ENCODE measurements at regions of chr6 and their contacts with region 1.

Region 1: GRCh38 chr6:158220786-158221442 is 52.8 kb downstream of the GTF2H5 start:
- DNase-seq: no peak
- H3K4me3 ChIP-seq: no peak overlapping the region
- CTCF ChIP-seq: peak; percentile 95

Region 2: DNA sequence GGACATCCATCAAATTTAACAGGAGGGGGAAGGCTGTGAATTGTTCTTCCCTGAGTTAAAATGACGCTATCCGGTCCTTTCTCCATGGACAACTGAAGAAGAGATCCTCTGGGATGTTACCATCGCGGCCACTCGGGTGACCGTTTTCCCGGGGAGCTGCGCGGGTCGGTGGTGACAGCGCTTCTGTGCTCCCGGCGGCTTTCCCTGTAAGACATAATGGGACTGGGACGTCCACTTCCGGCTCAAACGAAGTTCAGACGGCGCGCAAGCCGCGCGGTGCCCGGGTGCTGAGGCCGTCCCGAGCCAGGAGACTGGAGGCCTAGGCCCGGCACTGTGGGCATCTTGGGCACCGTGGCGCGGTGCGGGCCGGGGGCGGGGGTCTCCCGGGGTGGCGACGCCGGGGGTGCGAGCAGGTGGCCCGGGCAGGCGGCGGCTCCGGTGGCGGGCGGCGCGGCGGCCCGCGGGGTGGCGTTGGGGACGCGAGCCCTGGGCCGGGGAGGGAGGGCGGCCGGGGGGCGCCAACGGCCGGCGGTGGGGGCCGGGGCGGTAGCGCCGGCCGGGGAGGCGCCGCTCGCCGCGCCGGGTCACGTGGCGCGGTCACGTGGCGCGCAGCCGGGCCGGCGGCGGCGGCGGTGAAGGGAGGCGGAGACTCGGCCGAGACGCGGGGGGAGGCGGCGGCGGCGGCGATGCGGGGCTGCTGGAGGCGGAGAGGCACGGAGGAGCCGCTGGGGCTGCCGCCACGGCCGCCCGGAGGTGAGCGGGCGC is 10.8 kb after region 1 on chr6:
- CTCF ChIA-PET with region 1: interaction called, 34 read pairs
- POLR2A ChIA-PET with region 1: no interaction called
- DNase-seq: no peak
- H3K4me3 ChIP-seq: peak overlapping the region; percentile 73
- CTCF ChIP-seq: no peak

Region 3: GRCh38 chr6:158327211-158327610 is 106.3 kb after region 1 on chr6:
- CTCF ChIA-PET with region 1: no interaction called
- POLR2A ChIA-PET with region 1: no interaction called
- DNase-seq: no peak
- H3K4me3 ChIP-seq: no peak overlapping the region
- CTCF ChIP-seq: no peak

Region 4: DNA sequence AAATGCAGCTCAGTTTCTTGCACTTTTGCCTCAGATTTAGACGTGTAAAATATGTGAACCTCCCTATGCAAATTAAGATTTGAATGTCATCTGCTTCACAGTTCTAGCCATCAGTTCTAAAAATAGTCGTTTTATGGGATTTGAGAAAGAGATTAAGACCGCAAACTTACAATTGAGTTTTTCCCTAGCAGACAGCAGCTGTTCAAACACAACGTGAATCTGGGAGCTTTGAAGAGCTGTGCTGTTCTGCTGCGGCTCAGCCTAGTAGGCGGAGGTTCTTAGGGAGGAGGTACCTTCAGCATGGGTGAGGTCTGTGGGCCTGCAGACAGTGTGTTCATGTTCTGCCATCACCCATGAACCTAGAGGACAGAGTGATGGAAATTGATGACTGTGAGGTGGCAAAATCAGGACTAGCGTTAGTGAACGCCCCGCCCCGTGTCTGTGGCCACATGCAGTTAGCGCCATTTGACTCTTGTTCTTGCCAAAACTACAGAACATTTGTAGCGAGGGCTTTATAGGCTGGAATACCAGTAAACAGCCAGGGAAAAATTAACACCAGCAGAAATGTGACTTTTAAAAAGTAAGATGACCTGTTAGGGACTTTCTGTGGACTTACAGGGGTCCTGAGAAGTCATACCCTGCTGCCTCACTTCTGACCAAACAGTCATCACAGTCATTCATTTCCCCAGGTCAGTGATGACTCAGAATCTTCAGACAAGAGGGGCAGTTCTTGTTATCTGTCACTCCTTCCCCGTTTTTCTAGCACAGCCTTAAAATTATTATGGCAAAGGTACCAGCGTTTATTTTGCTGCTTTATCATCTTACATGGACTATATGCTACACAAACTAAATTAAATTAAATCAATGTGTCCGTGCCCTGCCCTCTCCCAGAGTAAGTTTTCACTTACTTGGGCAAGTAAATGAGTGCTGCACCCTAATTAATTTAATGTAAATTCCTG is 254.7 kb after region 1 on chr6:
- CTCF ChIA-PET with region 1: interaction called, 10 read pairs
- POLR2A ChIA-PET with region 1: no interaction called
- DNase-seq: peak; percentile 65
- H3K4me3 ChIP-seq: no peak overlapping the region
- CTCF ChIP-seq: no peak

Region 5: GRCh38 chr6:158518191-158519127 is 297.5 kb after region 1 on chr6:
- CTCF ChIA-PET with region 1: interaction called, 24 read pairs
- POLR2A ChIA-PET with region 1: no interaction called
- DNase-seq: no peak
- H3K4me3 ChIP-seq: peak overlapping the region; percentile 51
- CTCF ChIP-seq: peak; percentile 73

Region 6: GRCh38 chr6:158605266-158605878 is 384.5 kb after region 1 on chr6:
- CTCF ChIA-PET with region 1: interaction called, 257 read pairs
- POLR2A ChIA-PET with region 1: no interaction called
- DNase-seq: peak; percentile 29
- H3K4me3 ChIP-seq: no peak overlapping the region
- CTCF ChIP-seq: peak; percentile 73

Region 7: GRCh38 chr6:158704181-158704822 is 483.4 kb after region 1 on chr6:
- CTCF ChIA-PET with region 1: interaction called, 15 read pairs
- POLR2A ChIA-PET with region 1: no interaction called
- DNase-seq: no peak
- H3K4me3 ChIP-seq: peak overlapping the region; percentile 63
- CTCF ChIP-seq: peak; percentile 99

Measured in AG04449 (cell line).